Transverse colon (tissue), 4 donors: ENCODE measurements at regions of chr2 and their contacts with region 1.

Region 1: GRCh38 chr2:181715033-181715630 is 34.8 kb upstream of the NEUROD1 start:
- DNase-seq: peak; percentile 60
- H3K4me3 ChIP-seq: no peak overlapping the region
- H3K27ac ChIP-seq: no peak overlapping the region
- H3K4me1 ChIP-seq: no peaks in the 10 kb centered on the region
- H3K27me3 ChIP-seq: no peaks in the 10 kb centered on the region
- CTCF ChIP-seq: peak; percentile 56 to 68 (median 59)
- EP300 ChIP-seq: no peak
- POLR2A ChIP-seq: no peak

Region 2: GRCh38 chr2:181077128-181077709 is 637.9 kb before region 1 on chr2:
- in situ Hi-C with region 1: loop called in 2 of 4 experiments (anchors 25 kb)
- intact Hi-C with region 1: no loop called
- DNase-seq: no peak
- H3K4me3 ChIP-seq: no peak overlapping the region
- H3K27ac ChIP-seq: no peak overlapping the region
- H3K4me1 ChIP-seq: no peaks in the 10 kb centered on the region
- H3K27me3 ChIP-seq: no peaks in the 10 kb centered on the region
- CTCF ChIP-seq: peak; percentile 48 to 62 (median 52)
- EP300 ChIP-seq: no peak
- POLR2A ChIP-seq: no peak

Region 3: DNA sequence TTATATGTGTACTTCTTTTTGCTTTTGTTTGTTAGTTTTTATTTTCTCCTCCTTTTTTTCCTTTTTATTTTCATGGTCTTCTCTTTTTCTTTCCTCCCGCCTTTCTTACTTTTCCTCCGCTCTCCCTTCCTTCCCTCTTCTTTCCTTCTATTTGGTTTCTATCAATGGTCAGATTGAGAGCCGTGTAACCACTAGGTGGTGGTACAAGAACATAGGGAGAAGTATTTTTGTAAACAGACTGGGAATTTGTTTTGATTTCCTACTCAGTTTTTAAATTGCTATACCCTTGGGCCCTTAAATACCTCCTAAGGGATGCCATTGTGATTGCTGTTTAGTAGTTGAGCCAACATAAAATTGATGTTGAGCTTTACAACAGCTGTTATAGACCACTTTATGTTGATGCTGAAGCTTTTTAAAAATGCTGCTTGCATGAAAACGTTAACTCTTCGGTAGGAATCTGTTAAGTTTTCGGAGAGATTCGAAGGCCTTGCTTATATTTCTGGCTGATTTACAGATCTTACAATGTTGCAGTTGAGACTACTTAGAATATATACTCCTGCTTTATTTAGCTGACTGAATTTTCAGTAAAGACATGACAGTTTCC is 610.5 kb before region 1 on chr2:
- in situ Hi-C with region 1: loop called (anchors 10 to 25 kb)
- intact Hi-C with region 1: no loop called
- DNase-seq: peak; percentile 11
- H3K4me3 ChIP-seq: no peak overlapping the region
- H3K27ac ChIP-seq: no peak overlapping the region
- H3K4me1 ChIP-seq: peaks cover 0 to 5% (median 0%) of the 10 kb centered on the region in 4 donors
- H3K27me3 ChIP-seq: no peaks in the 10 kb centered on the region
- CTCF ChIP-seq: peak; percentile 51 to 61 (median 55)
- EP300 ChIP-seq: no peak
- POLR2A ChIP-seq: no peak

Region 4: DNA sequence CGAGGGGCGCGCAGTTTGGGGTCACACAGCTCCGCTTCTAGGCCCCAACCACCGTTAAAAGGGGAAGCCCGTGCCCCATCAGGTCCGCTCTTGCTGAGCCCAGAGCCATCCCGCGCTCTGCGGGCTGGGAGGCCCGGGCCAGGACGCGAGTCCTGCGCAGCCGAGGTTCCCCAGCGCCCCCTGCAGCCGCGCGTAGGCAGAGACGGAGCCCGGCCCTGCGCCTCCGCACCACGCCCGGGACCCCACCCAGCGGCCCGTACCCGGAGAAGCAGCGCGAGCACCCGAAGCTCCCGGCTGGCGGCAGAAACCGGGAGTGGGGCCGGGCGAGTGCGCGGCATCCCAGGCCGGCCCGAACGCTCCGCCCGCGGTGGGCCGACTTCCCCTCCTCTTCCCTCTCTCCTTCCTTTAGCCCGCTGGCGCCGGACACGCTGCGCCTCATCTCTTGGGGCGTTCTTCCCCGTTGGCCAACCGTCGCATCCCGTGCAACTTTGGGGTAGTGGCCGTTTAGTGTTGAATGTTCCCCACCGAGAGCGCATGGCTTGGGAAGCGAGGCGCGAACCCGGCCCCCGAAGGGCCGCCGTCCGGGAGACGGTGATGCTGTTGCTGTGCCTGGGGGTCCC is 257.9 kb before region 1 on chr2 and contains the start of gene ITGA4:
- in situ Hi-C with region 1: loop called in 1 of 4 experiments (anchors 25 kb)
- intact Hi-C with region 1: no loop called
- DNase-seq: peak; percentile 85
- H3K4me3 ChIP-seq: peak within 1 kb of the TSS; percentile 33 to 57 (median 50)
- H3K27ac ChIP-seq: peak within 1 kb of the TSS; percentile 68 to 86 (median 80)
- H3K4me1 ChIP-seq: peaks cover 0 to 15% (median 8%) of the 10 kb centered on the region in 4 donors
- H3K27me3 ChIP-seq: peaks cover 13% of the 10 kb centered on the region
- CTCF ChIP-seq: peak; percentile 49 to 71 (median 62)
- EP300 ChIP-seq: no peak
- POLR2A ChIP-seq: peak; percentile 6
- total RNA-seq, gene ITGA4: 1.1 to 30.8 (median 5.1) TPM

Region 5: DNA sequence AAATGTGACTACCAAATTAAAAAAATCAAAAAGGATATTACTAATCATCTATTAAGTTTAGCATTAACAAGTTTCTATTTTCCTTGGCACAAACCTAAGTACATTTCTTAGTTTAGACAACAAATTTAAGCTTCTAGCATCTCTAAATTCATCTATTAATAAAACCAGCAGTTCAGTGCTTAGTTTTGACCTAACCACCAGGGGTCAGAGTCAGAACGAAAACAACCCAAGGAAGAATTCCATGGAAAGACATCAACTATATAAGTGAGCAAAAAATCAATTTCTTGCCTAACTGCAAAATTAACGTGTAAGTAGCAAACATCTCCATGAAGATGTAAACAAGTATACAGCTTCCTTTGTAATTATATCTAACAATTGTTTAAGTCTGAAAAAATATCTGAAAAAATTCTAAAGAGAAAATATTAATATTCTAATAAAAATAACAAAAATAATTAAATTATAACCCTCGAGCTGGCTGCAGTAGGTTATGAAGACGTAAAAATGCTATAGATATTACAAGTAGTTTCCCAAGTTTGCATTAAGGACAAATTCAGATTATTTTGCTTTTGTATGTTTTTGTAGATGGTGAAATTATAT is 141.9 kb before region 1 on chr2:
- in situ Hi-C with region 1: loop called in 2 of 4 experiments (anchors 10 kb)
- intact Hi-C with region 1: no loop called
- DNase-seq: no peak
- H3K4me3 ChIP-seq: no peak overlapping the region
- H3K27ac ChIP-seq: no peak overlapping the region
- H3K4me1 ChIP-seq: no peaks in the 10 kb centered on the region
- H3K27me3 ChIP-seq: no peaks in the 10 kb centered on the region
- CTCF ChIP-seq: peak in 3 of 5 experiments; percentile 16 to 22 (median 21)
- EP300 ChIP-seq: no peak
- POLR2A ChIP-seq: no peak